ENCODE measurements at regions of chr7 and their contacts with region 1.

Region 1: DNA sequence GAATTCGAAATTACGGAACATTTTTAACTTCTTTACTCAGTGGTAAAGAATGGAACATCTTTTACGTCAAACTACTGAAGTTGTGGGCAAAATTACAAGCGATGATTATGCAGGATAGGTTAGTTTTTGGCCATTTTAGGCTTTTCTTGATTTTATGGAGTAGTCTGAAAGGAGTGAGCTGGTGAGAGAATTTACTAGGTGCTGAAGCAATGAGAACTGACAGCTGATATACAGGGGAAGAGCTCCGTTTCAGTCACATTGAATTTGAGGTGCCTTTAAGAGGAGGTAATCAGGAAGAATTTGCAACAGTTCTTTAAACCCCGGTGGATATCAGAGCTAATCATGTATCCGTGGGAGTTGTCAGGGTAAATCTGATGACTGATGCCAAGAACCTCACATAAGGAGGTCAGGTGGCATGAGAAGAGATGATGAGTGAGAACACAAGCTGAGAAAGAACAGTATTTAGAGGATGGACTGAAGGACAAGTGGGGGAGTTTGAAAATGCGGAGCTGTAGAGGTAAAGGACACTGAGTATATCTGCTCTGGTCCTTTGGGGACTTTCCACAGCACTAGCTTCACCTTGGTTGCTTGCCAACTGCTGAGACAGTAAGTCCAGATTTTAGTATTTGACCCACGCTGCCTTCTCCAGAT is 104.3 kb downstream of the AHR start:
- DNase-seq: peak; percentile 49
- H3K4me3 Mint-ChIP-seq: peak overlapping the region; percentile 53
- H3K27ac Mint-ChIP-seq: peak overlapping the region; percentile 92
- H3K4me1 Mint-ChIP-seq: peaks cover 44% of the 10 kb centered on the region
- H3K27me3 Mint-ChIP-seq: peaks cover 8% of the 10 kb centered on the region

Region 2: DNA sequence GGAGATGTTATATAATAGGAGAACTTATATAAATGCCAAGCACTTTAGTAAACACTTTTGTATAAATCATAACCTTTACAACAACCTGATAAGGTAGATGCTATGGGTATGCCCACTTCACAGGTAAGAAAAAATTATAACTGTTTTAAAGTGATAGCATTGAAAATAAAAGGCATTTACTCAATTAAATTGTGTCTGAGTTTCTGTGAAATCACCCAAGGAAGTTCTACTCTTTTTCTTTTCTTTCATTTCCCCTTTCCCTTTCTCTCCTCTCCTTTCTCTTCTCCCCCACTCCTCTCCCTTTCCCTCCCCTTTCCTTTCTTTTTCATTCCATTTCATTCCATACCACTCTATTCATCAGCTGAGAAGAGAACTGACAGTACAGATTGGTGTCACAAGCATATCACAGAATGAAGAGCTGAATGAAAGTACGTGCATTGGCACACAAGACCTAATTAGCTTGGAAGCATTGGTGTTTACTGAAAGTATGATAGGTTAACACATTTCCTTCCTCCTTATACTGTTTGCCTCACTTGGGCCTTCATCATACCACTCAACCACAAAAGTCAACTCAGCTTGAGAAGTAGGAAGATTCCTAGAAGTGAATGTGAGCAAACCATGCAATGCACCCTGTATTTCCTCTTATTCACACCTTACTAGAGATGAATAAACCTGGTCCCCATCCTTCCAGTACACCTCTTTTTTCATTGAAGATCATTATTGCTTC is 403.0 kb before region 1 on chr7:
- CTCF ChIA-PET with region 1: no interaction called
- POLR2A ChIA-PET with region 1: no interaction called
- intact Hi-C with region 1: loop called (anchors 5 kb)
- DNase-seq: no peak
- H3K4me3 Mint-ChIP-seq: no peak overlapping the region
- H3K27ac Mint-ChIP-seq: peak overlapping the region; percentile 56
- H3K4me1 Mint-ChIP-seq: peaks cover 8% of the 10 kb centered on the region
- H3K27me3 Mint-ChIP-seq: no peaks in the 10 kb centered on the region

Region 3: DNA sequence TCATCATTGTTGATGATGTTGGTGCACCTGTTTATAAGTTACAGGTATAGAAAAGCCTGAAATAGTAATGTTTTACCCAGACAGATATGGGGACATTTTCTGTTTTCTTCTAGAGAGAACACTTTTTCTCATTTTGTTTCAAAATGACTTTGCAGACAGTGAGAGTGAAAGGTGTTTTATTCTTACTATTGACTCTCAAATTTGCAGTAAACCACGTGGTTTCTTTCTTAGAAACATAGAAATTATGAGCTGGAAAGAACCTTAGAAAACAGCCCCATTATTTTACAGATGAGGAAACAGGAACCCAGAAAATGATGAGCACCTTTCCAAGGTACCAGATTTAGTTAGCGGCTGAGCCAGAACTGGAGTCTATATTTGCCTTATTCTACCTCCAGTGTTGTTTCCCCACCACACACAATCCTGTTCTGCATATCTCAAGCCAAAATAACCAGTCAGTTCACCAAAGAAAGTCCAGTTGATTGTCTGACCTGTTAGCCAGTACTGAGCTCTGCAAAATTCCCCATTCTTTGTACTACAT is 243.2 kb before region 1 on chr7:
- CTCF ChIA-PET with region 1: no interaction called
- POLR2A ChIA-PET with region 1: interaction called, 4 read pairs
- intact Hi-C with region 1: loop called (anchors 1 kb)
- DNase-seq: peak; percentile 33
- H3K4me3 Mint-ChIP-seq: no peak overlapping the region
- H3K27ac Mint-ChIP-seq: peak overlapping the region; percentile 70
- H3K4me1 Mint-ChIP-seq: peaks cover 38% of the 10 kb centered on the region
- H3K27me3 Mint-ChIP-seq: peaks cover 14% of the 10 kb centered on the region

Region 4: DNA sequence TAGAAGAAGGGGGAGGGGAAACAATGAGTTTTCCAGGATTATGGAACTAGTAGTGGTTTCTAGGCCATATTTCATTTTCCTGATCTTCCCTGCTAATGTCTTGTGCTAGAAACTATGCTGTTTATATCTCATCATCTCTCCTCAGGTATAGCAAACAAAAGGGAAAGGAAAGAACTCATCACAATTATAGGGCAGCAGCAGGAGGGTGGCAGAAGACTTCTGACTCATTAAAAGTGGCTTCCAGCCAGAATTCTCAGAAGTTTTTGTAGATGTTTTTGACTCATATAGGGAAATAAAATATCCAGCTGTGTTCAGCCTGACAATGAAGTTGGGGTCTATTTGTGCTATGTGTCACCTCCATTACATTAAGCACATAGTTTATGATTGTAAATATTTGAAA is 97.8 kb before region 1 on chr7:
- CTCF ChIA-PET with region 1: interaction called, 12 read pairs
- POLR2A ChIA-PET with region 1: interaction called, 18 read pairs
- intact Hi-C with region 1: loop called (anchors 1 kb)
- DNase-seq: peak; percentile 25
- H3K4me3 Mint-ChIP-seq: peak overlapping the region; percentile 56
- H3K27ac Mint-ChIP-seq: peak overlapping the region; percentile 83
- H3K4me1 Mint-ChIP-seq: peaks cover 26% of the 10 kb centered on the region
- H3K27me3 Mint-ChIP-seq: no peaks in the 10 kb centered on the region

Region 5: GRCh38 chr7:17530741-17531417 is 128.1 kb after region 1 on chr7:
- CTCF ChIA-PET with region 1: no interaction called
- POLR2A ChIA-PET with region 1: no interaction called
- intact Hi-C with region 1: loop called (anchors 2 kb)
- DNase-seq: no peak
- H3K4me3 Mint-ChIP-seq: no peak overlapping the region
- H3K27ac Mint-ChIP-seq: no peak overlapping the region
- H3K4me1 Mint-ChIP-seq: peaks cover 3% of the 10 kb centered on the region
- H3K27me3 Mint-ChIP-seq: peaks cover 5% of the 10 kb centered on the region

Region 6: GRCh38 chr7:18337048-18337809 is 934.5 kb after region 1 on chr7:
- CTCF ChIA-PET with region 1: no interaction called
- POLR2A ChIA-PET with region 1: no interaction called
- intact Hi-C with region 1: no loop called
- DNase-seq: no peak
- H3K4me3 Mint-ChIP-seq: no peak overlapping the region
- H3K27ac Mint-ChIP-seq: no peak overlapping the region
- H3K4me1 Mint-ChIP-seq: no peaks in the 10 kb centered on the region
- H3K27me3 Mint-ChIP-seq: no peaks in the 10 kb centered on the region